Transverse colon (tissue), 4 donors: ENCODE measurements at regions of chr6 and their contacts with region 1.

Region 1: GRCh38 chr6:42043787-42044475 is 6.4 kb upstream of the TAF8 start:
- DNase-seq: peak; percentile 92
- H3K4me3 ChIP-seq: peak overlapping the region in 1 of 4 donors; percentile 18
- H3K27ac ChIP-seq: peak overlapping the region; percentile 87 to 94 (median 92)
- H3K4me1 ChIP-seq: peaks cover 25 to 67% (median 60%) of the 10 kb centered on the region in 4 donors
- H3K27me3 ChIP-seq: no peaks in the 10 kb centered on the region
- CTCF ChIP-seq: peak; percentile 93 to 99 (median 97)
- EP300 ChIP-seq: no peak
- POLR2A ChIP-seq: no peak

Region 2: DNA sequence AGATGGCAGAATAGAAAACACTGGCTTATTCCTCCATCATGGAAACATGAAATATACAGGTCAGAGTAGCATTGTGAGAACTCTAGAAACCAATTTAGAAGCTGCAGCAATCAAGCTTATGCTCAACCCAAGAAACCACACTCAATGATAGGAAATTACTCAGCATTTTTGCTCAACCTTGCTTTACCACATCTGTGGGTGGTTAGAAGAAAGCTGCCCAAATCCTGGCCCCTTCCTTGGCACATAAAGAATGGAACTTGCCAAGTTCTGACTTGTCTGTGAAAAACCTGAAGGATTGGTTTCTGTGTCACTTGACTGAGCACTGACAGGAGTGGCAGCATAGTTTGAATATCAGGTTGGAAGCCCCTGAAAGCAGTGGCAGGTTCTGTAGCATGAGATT is 2001.7 kb before region 1 on chr6:
- in situ Hi-C with region 1: no loop called
- intact Hi-C with region 1: no loop called
- DNase-seq: no peak
- H3K4me3 ChIP-seq: no peak overlapping the region
- H3K27ac ChIP-seq: no peak overlapping the region
- H3K4me1 ChIP-seq: no peaks in the 10 kb centered on the region
- H3K27me3 ChIP-seq: no peaks in the 10 kb centered on the region
- CTCF ChIP-seq: no peak
- EP300 ChIP-seq: no peak
- POLR2A ChIP-seq: no peak

Region 3: GRCh38 chr6:41779793-41780545 is 264.0 kb before region 1 on chr6 and contains the start of gene FRS3:
- in situ Hi-C with region 1: loop called in 3 of 4 experiments (anchors 5 to 10 kb)
- intact Hi-C with region 1: loop called (anchors 5 kb)
- DNase-seq: peak; percentile 100
- H3K4me3 ChIP-seq: peak within 1 kb of the TSS; percentile 67 to 91 (median 84)
- H3K27ac ChIP-seq: peak within 1 kb of the TSS; percentile 88 to 96 (median 92)
- H3K4me1 ChIP-seq: peaks cover 13 to 23% (median 20%) of the 10 kb centered on the region in 4 donors
- H3K27me3 ChIP-seq: no peaks in the 10 kb centered on the region
- CTCF ChIP-seq: peak; percentile 83 to 97 (median 88)
- EP300 ChIP-seq: no peak
- POLR2A ChIP-seq: no peak
- total RNA-seq, gene FRS3: 2.8 to 4.5 (median 3.2) TPM

Region 4: GRCh38 chr6:41787219-41787917 is 256.6 kb before region 1 on chr6 and contains the start of gene TOMM6:
- in situ Hi-C with region 1: loop called in 3 of 4 experiments (anchors 5 to 10 kb)
- intact Hi-C with region 1: loop called (anchors 5 kb)
- DNase-seq: peak; percentile 97
- H3K4me3 ChIP-seq: peak within 1 kb of the TSS; percentile 70 to 96 (median 90)
- H3K27ac ChIP-seq: peak within 1 kb of the TSS; percentile 93 to 96 (median 94)
- H3K4me1 ChIP-seq: peaks cover 7 to 18% (median 17%) of the 10 kb centered on the region in 4 donors
- H3K27me3 ChIP-seq: no peaks in the 10 kb centered on the region
- CTCF ChIP-seq: peak; percentile 89 to 99 (median 95)
- EP300 ChIP-seq: no peak
- POLR2A ChIP-seq: peak; percentile 90
- total RNA-seq, gene TOMM6: 24.1 to 93.1 (median 85.6) TPM

Region 5: DNA sequence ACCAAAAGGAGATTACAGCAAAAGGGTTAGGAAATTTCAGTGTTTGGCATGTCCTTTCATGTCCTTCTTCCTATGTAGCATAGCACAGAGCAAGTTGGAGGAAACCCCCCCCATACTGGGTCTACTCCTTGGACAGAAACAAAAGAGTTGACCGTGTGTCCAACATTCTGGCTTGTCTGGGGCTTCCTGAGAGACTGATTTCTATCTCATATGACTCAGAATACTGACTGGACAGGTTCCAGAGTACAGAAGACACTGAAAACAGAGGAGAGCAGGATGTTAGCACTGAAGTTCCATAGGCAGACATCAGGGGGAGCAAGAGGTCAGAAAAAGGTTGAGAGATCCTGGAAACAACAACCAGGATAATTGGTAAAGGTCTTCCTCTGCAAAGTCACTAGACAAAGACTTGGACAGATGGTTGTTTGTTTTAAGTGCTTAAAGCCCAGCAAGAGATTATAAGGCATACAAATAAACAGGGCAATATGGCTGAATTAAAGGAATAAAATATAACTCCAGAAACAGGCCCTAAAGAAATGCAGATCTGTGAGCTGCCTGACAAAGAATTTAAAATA is 197.2 kb before region 1 on chr6:
- in situ Hi-C with region 1: loop called in 3 of 4 experiments (anchors 5 to 25 kb)
- intact Hi-C with region 1: loop called (anchors 2 kb)
- DNase-seq: peak; percentile 69
- H3K4me3 ChIP-seq: no peak overlapping the region
- H3K27ac ChIP-seq: peak overlapping the region; percentile 2 to 48 (median 34)
- H3K4me1 ChIP-seq: peaks cover 0 to 10% (median 6%) of the 10 kb centered on the region in 4 donors
- H3K27me3 ChIP-seq: no peaks in the 10 kb centered on the region
- CTCF ChIP-seq: peak; percentile 69 to 79 (median 79)
- EP300 ChIP-seq: no peak
- POLR2A ChIP-seq: no peak

Region 6: GRCh38 chr6:41936073-41936837 is 107.7 kb before region 1 on chr6:
- in situ Hi-C with region 1: loop called in 3 of 4 experiments (anchors 10 kb)
- intact Hi-C with region 1: loop called (anchors 5 kb)
- DNase-seq: peak; percentile 64
- H3K4me3 ChIP-seq: no peak overlapping the region
- H3K27ac ChIP-seq: peak overlapping the region; percentile 6 to 45 (median 26)
- H3K4me1 ChIP-seq: peaks cover 24 to 54% (median 37%) of the 10 kb centered on the region in 4 donors
- H3K27me3 ChIP-seq: no peaks in the 10 kb centered on the region
- CTCF ChIP-seq: peak; percentile 75 to 84 (median 78)
- EP300 ChIP-seq: no peak
- POLR2A ChIP-seq: no peak

Region 7: DNA sequence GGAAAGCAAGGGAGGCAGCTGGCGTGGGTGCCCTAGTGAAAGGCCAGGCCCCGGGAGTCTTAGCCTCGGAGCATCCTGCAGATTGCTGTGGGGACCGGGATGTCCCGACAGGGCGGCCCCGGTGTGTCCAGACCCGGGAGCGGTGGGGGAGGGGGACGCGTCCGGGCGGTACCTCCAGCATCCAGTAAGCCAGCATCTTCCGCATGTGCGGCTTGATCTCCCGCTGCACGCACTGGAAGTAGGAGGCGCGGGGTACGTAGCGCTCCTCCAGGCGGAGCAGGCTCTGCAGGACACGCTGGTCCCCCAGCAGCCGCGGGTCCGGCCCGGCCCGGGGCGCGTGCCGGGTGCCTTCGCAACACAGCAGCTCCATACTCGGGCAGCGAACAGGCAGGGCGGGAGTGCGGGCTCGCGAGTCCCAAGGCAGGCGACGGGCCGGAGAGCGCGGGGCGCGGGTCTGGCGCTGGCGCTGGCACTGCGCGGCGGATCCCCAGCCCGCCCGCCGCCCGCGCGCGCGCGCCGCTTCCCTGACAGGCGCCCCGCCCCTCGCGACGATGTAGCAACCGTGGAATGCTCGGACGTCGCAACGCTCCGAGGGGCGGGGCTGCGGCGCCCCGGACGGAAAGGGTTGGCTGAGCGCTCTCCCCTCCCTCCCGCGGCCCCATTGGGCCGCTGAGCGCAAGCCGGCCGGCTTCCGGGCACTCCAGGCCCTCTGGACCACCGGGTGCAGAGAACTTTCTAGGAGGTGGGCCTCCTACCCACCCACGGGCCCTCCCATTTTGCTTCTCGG is 102.5 kb before region 1 on chr6 and contains the start of gene CCND3:
- in situ Hi-C with region 1: loop called in 3 of 4 experiments (anchors 10 kb)
- intact Hi-C with region 1: loop called (anchors 5 kb)
- DNase-seq: peak; percentile 93
- H3K4me3 ChIP-seq: peak within 1 kb of the TSS; percentile 75 to 84 (median 80)
- H3K27ac ChIP-seq: peak within 1 kb of the TSS; percentile 84 to 95 (median 94)
- H3K4me1 ChIP-seq: peaks cover 29 to 47% (median 41%) of the 10 kb centered on the region in 4 donors
- H3K27me3 ChIP-seq: no peaks in the 10 kb centered on the region
- CTCF ChIP-seq: no peak
- EP300 ChIP-seq: no peak
- POLR2A ChIP-seq: no peak
- total RNA-seq, gene CCND3: 55.3 to 178 (median 75.6) TPM

Region 8: GRCh38 chr6:42890311-42891198 is 846.6 kb after region 1 on chr6:
- in situ Hi-C with region 1: no loop called
- intact Hi-C with region 1: no loop called
- DNase-seq: peak; percentile 95
- H3K4me3 ChIP-seq: peak overlapping the region; percentile 65 to 86 (median 77)
- H3K27ac ChIP-seq: peak overlapping the region; percentile 93 to 96 (median 93)
- H3K4me1 ChIP-seq: peaks cover 7 to 16% (median 8%) of the 10 kb centered on the region in 4 donors
- H3K27me3 ChIP-seq: no peaks in the 10 kb centered on the region
- CTCF ChIP-seq: no peak
- EP300 ChIP-seq: no peak
- POLR2A ChIP-seq: peak; percentile 94